CD4-positive, alpha-beta T cell (primary cell): ENCODE measurements at regions of chr15 and their contacts with region 1.

Region 1: GRCh38 chr15:90394748-90395442 is 6.9 kb downstream of the IQGAP1 start:
- DNase-seq: no peak
- ATAC-seq: no peak
- H3K4me3 ChIP-seq: no peak overlapping the region
- H3K4me3 Mint-ChIP-seq: peak overlapping the region; percentile 35
- H3K27ac ChIP-seq: peak overlapping the region in 1 of 2 donors; percentile 31
- H3K27ac Mint-ChIP-seq: peak overlapping the region; percentile 6
- H3K4me1 ChIP-seq: peaks cover 51% of the 10 kb centered on the region
- H3K4me1 Mint-ChIP-seq: peaks cover 72% of the 10 kb centered on the region
- H3K27me3 ChIP-seq: no peaks in the 10 kb centered on the region
- H3K27me3 Mint-ChIP-seq: no peaks in the 10 kb centered on the region
- CTCF ChIP-seq: no peak

Region 2: GRCh38 chr15:90241343-90242192 is 153.3 kb before region 1 on chr15:
- CTCF ChIA-PET with region 1: no interaction called
- POLR2A ChIA-PET with region 1: no interaction called
- intact Hi-C with region 1: no loop called
- DNase-seq: no peak
- ATAC-seq: no peak
- H3K4me3 ChIP-seq: no peak overlapping the region
- H3K4me3 Mint-ChIP-seq: no peak overlapping the region
- H3K27ac ChIP-seq: no peak overlapping the region
- H3K27ac Mint-ChIP-seq: no peak overlapping the region
- H3K4me1 ChIP-seq: no peaks in the 10 kb centered on the region
- H3K4me1 Mint-ChIP-seq: no peaks in the 10 kb centered on the region
- H3K27me3 ChIP-seq: no peaks in the 10 kb centered on the region
- H3K27me3 Mint-ChIP-seq: no peaks in the 10 kb centered on the region
- CTCF ChIP-seq: no peak

Region 3: DNA sequence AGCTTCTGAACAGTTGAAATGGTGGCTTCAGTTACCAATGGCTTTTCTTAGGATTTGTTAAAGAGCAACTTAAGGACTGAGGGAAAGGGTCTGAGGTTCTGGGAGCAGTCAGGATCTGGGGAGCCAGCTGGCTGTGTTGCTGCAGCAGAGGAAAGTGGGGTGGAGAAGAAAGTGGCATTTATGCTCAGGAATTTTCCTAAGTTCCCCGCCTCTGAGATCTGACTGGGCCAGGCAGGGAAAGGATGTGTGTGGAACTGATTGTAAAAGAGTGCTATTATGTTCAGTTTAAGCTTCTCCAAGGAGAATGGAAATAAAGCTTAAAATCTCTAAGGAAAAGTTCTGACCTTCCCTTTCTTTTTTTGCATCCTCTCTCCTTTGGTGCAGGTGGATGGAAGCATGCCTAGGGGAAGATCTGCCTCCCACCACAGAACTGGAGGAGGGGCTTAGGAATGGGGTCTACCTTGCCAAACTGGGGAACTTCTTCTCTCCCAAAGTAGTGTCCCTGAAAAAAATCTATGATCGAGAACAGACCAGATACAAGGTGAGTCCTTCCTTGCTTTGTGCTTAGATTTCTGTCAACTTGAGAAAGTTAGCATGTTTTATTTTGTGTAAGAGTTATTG is 30.9 kb after region 1 on chr15:
- CTCF ChIA-PET with region 1: no interaction called
- POLR2A ChIA-PET with region 1: no interaction called
- intact Hi-C with region 1: loop called in 1 of 2 experiments (anchors 5 kb)
- DNase-seq: no peak
- ATAC-seq: no peak
- H3K4me3 ChIP-seq: no peak overlapping the region
- H3K4me3 Mint-ChIP-seq: no peak overlapping the region
- H3K27ac ChIP-seq: no peak overlapping the region
- H3K27ac Mint-ChIP-seq: no peak overlapping the region
- H3K4me1 ChIP-seq: peaks cover 21% of the 10 kb centered on the region
- H3K4me1 Mint-ChIP-seq: peaks cover 42% of the 10 kb centered on the region
- H3K27me3 ChIP-seq: no peaks in the 10 kb centered on the region
- H3K27me3 Mint-ChIP-seq: no peaks in the 10 kb centered on the region
- CTCF ChIP-seq: no peak